HCT116 (cell line): ENCODE measurements at regions of chr14 and their contacts with region 1.

Region 1: GRCh38 chr14:38867561-38868150 is 235.4 kb downstream of the SEC23A start:
- DNase-seq: peak; percentile 67
- ATAC-seq: peak; percentile 100
- H3K4me3 ChIP-seq: no peak overlapping the region
- H3K27ac ChIP-seq: no peak overlapping the region
- H3K4me1 ChIP-seq: no peaks in the 10 kb centered on the region
- H3K27me3 ChIP-seq: no peaks in the 10 kb centered on the region
- CTCF ChIP-seq: peak; percentile 62 to 90 (median 79)
- POLR2A ChIP-seq: no peak
- RAD21 ChIP-seq: peak; percentile 77

Region 2: GRCh38 chr14:37903343-37904191 is 964.1 kb before region 1 on chr14:
- CTCF ChIA-PET with region 1: interaction called, 6 read pairs
- POLR2A ChIA-PET with region 1: no interaction called
- RAD21 ChIA-PET with region 1: no interaction called
- intact Hi-C with region 1: loop called (anchors 1 kb)
- DNase-seq: peak; percentile 28
- ATAC-seq: peak; percentile 82
- H3K4me3 ChIP-seq: no peak overlapping the region
- H3K27ac ChIP-seq: no peak overlapping the region
- H3K4me1 ChIP-seq: 0 out of 4 replicates have a peak, but pooled peaks cover 0 to 4% of the 10 kb centered on the region in 2 experiments
- H3K27me3 ChIP-seq: peaks cover 8% of the 10 kb centered on the region; the same call in 1 of the 2 replicates
- CTCF ChIP-seq: peak; percentile 32 to 66 (median 36); a peak in 4 of 6 replicates
- POLR2A ChIP-seq: no peak
- RAD21 ChIP-seq: peak; percentile 64

Region 3: DNA sequence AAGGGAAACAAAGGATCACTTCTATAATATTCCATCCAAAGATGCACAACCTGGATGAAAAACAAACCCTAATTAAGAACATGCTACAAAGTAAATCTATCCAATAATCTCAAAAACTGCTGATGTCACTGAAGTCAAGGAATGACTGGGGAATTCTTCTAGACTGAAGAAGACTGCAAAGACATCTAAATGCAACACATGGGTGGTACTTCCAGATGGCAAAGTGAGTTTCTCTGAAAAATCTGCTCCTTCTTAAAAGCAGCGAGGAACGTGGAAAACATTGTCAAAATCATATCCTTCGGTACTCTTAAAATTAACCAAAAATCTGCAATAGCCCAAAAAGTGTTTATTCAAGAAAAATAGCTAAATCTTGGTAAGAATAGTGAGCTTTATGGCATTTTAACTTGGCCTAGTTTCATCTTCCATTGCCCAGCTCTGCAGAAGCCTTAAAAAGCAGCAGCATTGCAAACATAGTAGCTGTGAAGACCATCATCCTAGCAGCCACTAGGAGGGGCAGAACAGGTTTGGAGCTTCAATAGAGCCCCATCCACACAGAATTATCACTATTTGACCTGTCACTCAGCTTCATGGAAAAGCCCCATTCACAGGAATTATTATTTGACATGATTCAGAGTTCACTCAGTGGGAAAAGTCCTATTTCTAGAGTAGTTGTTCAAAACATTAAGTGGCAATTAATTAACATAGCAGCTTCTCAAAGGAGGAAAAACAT is 619.2 kb before region 1 on chr14:
- CTCF ChIA-PET with region 1: no interaction called
- POLR2A ChIA-PET with region 1: no interaction called
- RAD21 ChIA-PET with region 1: no interaction called
- intact Hi-C with region 1: loop called (anchors 10 kb)
- DNase-seq: no peak
- ATAC-seq: no peak; the same call in 1 of the 2 replicates
- H3K4me3 ChIP-seq: no peak overlapping the region
- H3K27ac ChIP-seq: no peak overlapping the region
- H3K4me1 ChIP-seq: no peaks in the 10 kb centered on the region
- H3K27me3 ChIP-seq: no peaks in the 10 kb centered on the region
- CTCF ChIP-seq: peak in 2 of 3 experiments; percentile 10 to 15; a peak in 1 of 6 replicates
- POLR2A ChIP-seq: no peak
- RAD21 ChIP-seq: no peak

Region 4: GRCh38 chr14:38605193-38606114 is 262.2 kb before region 1 on chr14:
- CTCF ChIA-PET with region 1: interaction called, 15 read pairs
- POLR2A ChIA-PET with region 1: no interaction called
- RAD21 ChIA-PET with region 1: no interaction called
- intact Hi-C with region 1: loop called (anchors 5 kb)
- DNase-seq: no peak
- ATAC-seq: no peak
- H3K4me3 ChIP-seq: no peak overlapping the region
- H3K27ac ChIP-seq: no peak overlapping the region
- H3K4me1 ChIP-seq: no peaks in the 10 kb centered on the region
- H3K27me3 ChIP-seq: no peaks in the 10 kb centered on the region
- CTCF ChIP-seq: peak in 2 of 3 experiments; percentile 17 to 46; a peak in 3 of 6 replicates
- POLR2A ChIP-seq: no peak
- RAD21 ChIP-seq: peak; percentile 24; the same call in 1 of the 2 replicates

Region 5: GRCh38 chr14:38721822-38722431 is 145.7 kb before region 1 on chr14:
- CTCF ChIA-PET with region 1: interaction called, 72 read pairs
- POLR2A ChIA-PET with region 1: no interaction called
- RAD21 ChIA-PET with region 1: interaction called in 1 of 2 experiments, 3 read pairs
- intact Hi-C with region 1: loop called (anchors 1 kb)
- DNase-seq: peak; percentile 40
- ATAC-seq: peak; percentile 93
- H3K4me3 ChIP-seq: no peak overlapping the region
- H3K27ac ChIP-seq: no peak overlapping the region
- H3K4me1 ChIP-seq: no peaks in the 10 kb centered on the region
- H3K27me3 ChIP-seq: no peaks in the 10 kb centered on the region
- CTCF ChIP-seq: peak; percentile 41 to 85 (median 82); a peak in 5 of 6 replicates
- POLR2A ChIP-seq: no peak
- RAD21 ChIP-seq: peak; percentile 73

Region 6: GRCh38 chr14:38762426-38762825 is 105.2 kb before region 1 on chr14:
- CTCF ChIA-PET with region 1: no interaction called
- POLR2A ChIA-PET with region 1: no interaction called
- RAD21 ChIA-PET with region 1: no interaction called
- intact Hi-C with region 1: no loop called
- DNase-seq: no peak
- ATAC-seq: no peak
- H3K4me3 ChIP-seq: no peak overlapping the region
- H3K27ac ChIP-seq: no peak overlapping the region
- H3K4me1 ChIP-seq: no peaks in the 10 kb centered on the region
- H3K27me3 ChIP-seq: 0 out of 2 replicates have a peak, but pooled peaks cover 2% of the 10 kb centered on the region
- CTCF ChIP-seq: no peak
- POLR2A ChIP-seq: no peak
- RAD21 ChIP-seq: no peak

Region 7: GRCh38 chr14:39015360-39015961 is 147.8 kb after region 1 on chr14:
- CTCF ChIA-PET with region 1: interaction called, 15 read pairs
- POLR2A ChIA-PET with region 1: no interaction called
- RAD21 ChIA-PET with region 1: no interaction called
- intact Hi-C with region 1: loop called (anchors 2 kb)
- DNase-seq: peak; percentile 28
- ATAC-seq: peak; percentile 62
- H3K4me3 ChIP-seq: no peak overlapping the region
- H3K27ac ChIP-seq: no peak overlapping the region
- H3K4me1 ChIP-seq: no peaks in the 10 kb centered on the region
- H3K27me3 ChIP-seq: no peaks in the 10 kb centered on the region
- CTCF ChIP-seq: peak; percentile 39 to 85 (median 83); a peak in 5 of 6 replicates
- POLR2A ChIP-seq: no peak
- RAD21 ChIP-seq: peak; percentile 58